CD4-positive, alpha-beta T cell (primary cell): ENCODE measurements at regions of chr15 and their contacts with region 1.

Region 1: DNA sequence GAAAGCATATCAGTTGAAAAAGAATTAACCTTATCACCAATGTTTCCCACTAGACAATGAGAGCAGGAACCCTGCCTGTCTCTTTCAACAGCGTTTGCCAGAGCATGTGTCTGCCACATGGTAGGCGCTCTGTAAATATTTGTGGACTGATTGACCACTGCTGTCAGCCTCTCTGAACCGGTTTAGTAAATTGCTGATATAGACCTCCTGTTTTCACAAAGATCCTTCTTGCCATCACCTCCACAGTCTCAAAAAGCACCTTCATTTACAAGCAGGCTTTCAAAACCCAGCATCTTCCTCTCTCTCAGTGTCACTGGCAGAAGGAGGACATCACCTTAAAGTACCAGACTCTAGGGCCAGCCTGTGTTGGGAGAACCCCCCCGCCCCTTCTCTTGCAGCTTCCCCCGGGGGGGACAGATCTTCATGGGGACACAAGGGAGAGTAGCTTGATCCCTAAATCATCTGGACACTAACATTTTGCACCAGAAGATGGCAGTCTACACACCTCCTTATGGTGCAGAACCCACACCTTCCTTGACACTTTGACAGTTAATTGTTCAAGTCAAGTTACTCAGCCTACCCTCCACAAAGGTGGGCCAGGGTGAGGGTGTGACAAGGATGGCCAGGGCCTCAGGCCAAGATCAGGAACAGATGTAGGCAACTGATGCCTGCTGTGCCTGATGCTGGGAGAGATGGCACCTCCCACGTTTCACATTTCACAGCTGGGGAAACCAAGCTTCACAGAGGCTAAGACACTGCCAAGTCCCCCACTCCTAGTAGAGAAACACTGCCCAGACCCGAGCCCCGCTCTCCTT is 37.8 kb upstream of the USP3 start:
- DNase-seq: peak in 12 of 14 experiments; percentile 20 to 89 (median 42)
- ATAC-seq: peak; percentile 81
- H3K4me3 ChIP-seq: no peak overlapping the region
- H3K4me3 Mint-ChIP-seq: no peak overlapping the region
- H3K27ac ChIP-seq: no peak overlapping the region
- H3K27ac Mint-ChIP-seq: peak overlapping the region; percentile 19
- H3K4me1 ChIP-seq: peaks cover 15% of the 10 kb centered on the region
- H3K4me1 Mint-ChIP-seq: peaks cover 39% of the 10 kb centered on the region
- H3K27me3 ChIP-seq: no peaks in the 10 kb centered on the region
- H3K27me3 Mint-ChIP-seq: no peaks in the 10 kb centered on the region
- CTCF ChIP-seq: peak; percentile 79

Region 2: DNA sequence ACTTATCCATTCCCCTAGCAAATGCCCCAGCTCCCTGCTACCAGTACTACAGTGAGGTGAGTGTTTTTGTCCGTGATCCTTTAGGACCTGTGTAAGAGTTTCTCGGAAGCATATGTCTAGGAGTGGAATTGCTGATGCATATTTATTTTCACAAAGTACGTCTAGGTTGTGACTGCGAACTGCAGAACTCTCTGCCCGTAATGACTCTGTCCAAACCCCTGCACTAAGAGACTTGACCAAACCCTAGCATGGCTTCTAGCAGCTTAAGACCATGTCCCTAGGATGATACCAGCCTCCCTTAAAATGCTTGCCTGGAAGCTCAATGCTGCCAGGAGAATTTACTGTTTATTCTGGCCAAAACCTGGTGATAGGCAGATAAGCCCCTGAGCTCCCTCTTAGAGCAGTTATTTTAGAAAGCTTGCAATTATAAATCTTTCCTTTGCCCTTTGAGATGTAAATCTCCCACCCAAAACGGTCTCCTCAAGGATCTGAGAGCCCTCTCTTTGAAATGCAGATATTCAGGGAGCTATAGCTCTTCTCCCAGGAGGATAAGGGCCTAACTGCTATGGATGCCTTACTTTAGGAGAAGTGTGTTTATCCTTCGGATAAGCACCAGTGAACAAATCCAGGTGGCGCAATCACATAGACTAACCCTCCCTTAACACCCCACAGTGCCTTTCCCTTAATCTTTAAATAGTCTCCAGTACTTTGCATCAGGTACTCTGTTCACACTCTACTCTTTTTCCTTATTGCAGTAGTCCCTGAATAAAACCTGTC is 70.2 kb before region 1 on chr15:
- CTCF ChIA-PET with region 1: no interaction called
- POLR2A ChIA-PET with region 1: no interaction called
- intact Hi-C with region 1: no loop called
- DNase-seq: no peak
- ATAC-seq: no peak
- H3K4me3 ChIP-seq: no peak overlapping the region
- H3K4me3 Mint-ChIP-seq: no peak overlapping the region
- H3K27ac ChIP-seq: no peak overlapping the region
- H3K27ac Mint-ChIP-seq: no peak overlapping the region
- H3K4me1 ChIP-seq: peaks cover 5% of the 10 kb centered on the region
- H3K4me1 Mint-ChIP-seq: peaks cover 9% of the 10 kb centered on the region
- H3K27me3 ChIP-seq: peaks cover 0 to 8% of the 10 kb centered on the region in 2 experiments
- H3K27me3 Mint-ChIP-seq: no peaks in the 10 kb centered on the region
- CTCF ChIP-seq: no peak

Region 3: GRCh38 chr15:63447017-63447676 is 19.4 kb before region 1 on chr15:
- CTCF ChIA-PET with region 1: interaction called, 11 read pairs
- POLR2A ChIA-PET with region 1: no interaction called
- intact Hi-C with region 1: no loop called
- DNase-seq: no peak
- ATAC-seq: no peak
- H3K4me3 ChIP-seq: no peak overlapping the region
- H3K4me3 Mint-ChIP-seq: no peak overlapping the region
- H3K27ac ChIP-seq: no peak overlapping the region
- H3K27ac Mint-ChIP-seq: peak overlapping the region; percentile 79
- H3K4me1 ChIP-seq: peaks cover 21% of the 10 kb centered on the region
- H3K4me1 Mint-ChIP-seq: peaks cover 12% of the 10 kb centered on the region
- H3K27me3 ChIP-seq: no peaks in the 10 kb centered on the region
- H3K27me3 Mint-ChIP-seq: no peaks in the 10 kb centered on the region
- CTCF ChIP-seq: no peak

Region 4: GRCh38 chr15:63497642-63498467 is 31.3 kb after region 1 on chr15:
- CTCF ChIA-PET with region 1: interaction called, 48 read pairs
- POLR2A ChIA-PET with region 1: interaction called, 13 read pairs
- intact Hi-C with region 1: no loop called
- DNase-seq: peak; percentile 56 to 93 (median 73)
- ATAC-seq: peak; percentile 74
- H3K4me3 ChIP-seq: peak overlapping the region; percentile 37
- H3K4me3 Mint-ChIP-seq: no peak overlapping the region
- H3K27ac ChIP-seq: peak overlapping the region; percentile 88 to 99
- H3K27ac Mint-ChIP-seq: no peak overlapping the region
- H3K4me1 ChIP-seq: peaks cover 94% of the 10 kb centered on the region
- H3K4me1 Mint-ChIP-seq: peaks cover 75% of the 10 kb centered on the region
- H3K27me3 ChIP-seq: no peaks in the 10 kb centered on the region
- H3K27me3 Mint-ChIP-seq: no peaks in the 10 kb centered on the region
- CTCF ChIP-seq: no peak

Region 5: GRCh38 chr15:63531586-63531985 is 65.0 kb after region 1 on chr15:
- CTCF ChIA-PET with region 1: interaction called, 15 read pairs
- POLR2A ChIA-PET with region 1: no interaction called
- intact Hi-C with region 1: no loop called
- DNase-seq: peak in 2 of 14 experiments; percentile 28 to 38
- ATAC-seq: peak; percentile 51
- H3K4me3 ChIP-seq: no peak overlapping the region
- H3K4me3 Mint-ChIP-seq: peak overlapping the region; percentile 2
- H3K27ac ChIP-seq: no peak overlapping the region
- H3K27ac Mint-ChIP-seq: no peak overlapping the region
- H3K4me1 ChIP-seq: peaks cover 35% of the 10 kb centered on the region
- H3K4me1 Mint-ChIP-seq: peaks cover 92% of the 10 kb centered on the region
- H3K27me3 ChIP-seq: no peaks in the 10 kb centered on the region
- H3K27me3 Mint-ChIP-seq: no peaks in the 10 kb centered on the region
- CTCF ChIP-seq: peak; percentile 21

Region 6: DNA sequence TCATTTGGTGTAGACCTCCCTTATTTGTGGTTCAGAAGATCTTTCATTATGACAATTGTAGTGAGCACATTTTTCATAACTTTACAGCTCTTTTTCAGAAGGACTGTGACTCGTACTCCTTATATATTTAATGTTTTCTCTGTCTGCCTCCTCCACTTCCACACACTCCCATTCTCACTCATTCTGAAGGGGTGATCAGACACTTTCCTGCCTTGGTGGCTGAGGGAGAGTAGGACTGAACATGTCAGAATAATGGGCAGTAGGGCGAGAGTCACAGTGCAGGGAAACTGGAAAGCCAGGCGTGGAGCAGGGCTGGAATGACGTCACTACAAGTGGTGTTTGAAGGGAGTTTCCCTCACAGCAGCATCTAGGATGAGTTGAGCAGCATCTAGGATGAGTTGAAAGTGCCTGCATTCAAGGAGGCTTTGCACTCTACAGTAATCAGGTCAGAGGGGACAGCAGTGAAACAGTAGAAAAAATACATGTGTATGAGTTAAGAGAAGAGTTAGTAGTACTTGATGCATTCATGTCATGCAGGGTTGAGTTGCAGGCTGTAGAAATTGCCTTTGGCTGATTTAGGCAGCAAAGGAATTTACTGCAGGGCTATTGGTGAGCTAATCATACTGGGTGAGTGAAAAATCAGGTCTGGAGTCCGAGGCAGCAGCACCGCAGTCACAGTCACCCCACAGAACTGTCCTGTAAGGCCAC is 94.3 kb after region 1 on chr15:
- CTCF ChIA-PET with region 1: interaction called, 15 read pairs
- POLR2A ChIA-PET with region 1: no interaction called
- intact Hi-C with region 1: loop called in 1 of 2 experiments (anchors 5 kb)
- DNase-seq: peak in 3 of 14 experiments; percentile 8 to 50 (median 50)
- ATAC-seq: peak; percentile 34
- H3K4me3 ChIP-seq: no peak overlapping the region
- H3K4me3 Mint-ChIP-seq: no peak overlapping the region
- H3K27ac ChIP-seq: no peak overlapping the region
- H3K27ac Mint-ChIP-seq: peak overlapping the region; percentile 38
- H3K4me1 ChIP-seq: no peaks in the 10 kb centered on the region
- H3K4me1 Mint-ChIP-seq: peaks cover 25% of the 10 kb centered on the region
- H3K27me3 ChIP-seq: no peaks in the 10 kb centered on the region
- H3K27me3 Mint-ChIP-seq: no peaks in the 10 kb centered on the region
- CTCF ChIP-seq: no peak

Region 7: GRCh38 chr15:63772520-63772919 is 305.9 kb after region 1 on chr15:
- CTCF ChIA-PET with region 1: no interaction called
- POLR2A ChIA-PET with region 1: no interaction called
- intact Hi-C with region 1: no loop called
- DNase-seq: no peak
- ATAC-seq: no peak
- H3K4me3 ChIP-seq: no peak overlapping the region
- H3K4me3 Mint-ChIP-seq: no peak overlapping the region
- H3K27ac ChIP-seq: no peak overlapping the region
- H3K27ac Mint-ChIP-seq: no peak overlapping the region
- H3K4me1 ChIP-seq: peaks cover 5% of the 10 kb centered on the region
- H3K4me1 Mint-ChIP-seq: peaks cover 77% of the 10 kb centered on the region
- H3K27me3 ChIP-seq: no peaks in the 10 kb centered on the region
- H3K27me3 Mint-ChIP-seq: no peaks in the 10 kb centered on the region
- CTCF ChIP-seq: no peak

Region 8: GRCh38 chr15:64067564-64068030 is 601.0 kb after region 1 on chr15:
- CTCF ChIA-PET with region 1: no interaction called
- POLR2A ChIA-PET with region 1: no interaction called
- intact Hi-C with region 1: loop called in 1 of 2 experiments (anchors 5 kb)
- DNase-seq: peak; percentile 44 to 83 (median 62)
- ATAC-seq: peak; percentile 89
- H3K4me3 ChIP-seq: no peak overlapping the region
- H3K4me3 Mint-ChIP-seq: no peak overlapping the region
- H3K27ac ChIP-seq: no peak overlapping the region
- H3K27ac Mint-ChIP-seq: no peak overlapping the region
- H3K4me1 ChIP-seq: peaks cover 7% of the 10 kb centered on the region
- H3K4me1 Mint-ChIP-seq: no peaks in the 10 kb centered on the region
- H3K27me3 ChIP-seq: no peaks in the 10 kb centered on the region
- H3K27me3 Mint-ChIP-seq: no peaks in the 10 kb centered on the region
- CTCF ChIP-seq: peak; percentile 75